CD8-positive, alpha-beta T cell (primary cell): ENCODE measurements at regions of chr7 and their contacts with region 1.

Region 1: DNA sequence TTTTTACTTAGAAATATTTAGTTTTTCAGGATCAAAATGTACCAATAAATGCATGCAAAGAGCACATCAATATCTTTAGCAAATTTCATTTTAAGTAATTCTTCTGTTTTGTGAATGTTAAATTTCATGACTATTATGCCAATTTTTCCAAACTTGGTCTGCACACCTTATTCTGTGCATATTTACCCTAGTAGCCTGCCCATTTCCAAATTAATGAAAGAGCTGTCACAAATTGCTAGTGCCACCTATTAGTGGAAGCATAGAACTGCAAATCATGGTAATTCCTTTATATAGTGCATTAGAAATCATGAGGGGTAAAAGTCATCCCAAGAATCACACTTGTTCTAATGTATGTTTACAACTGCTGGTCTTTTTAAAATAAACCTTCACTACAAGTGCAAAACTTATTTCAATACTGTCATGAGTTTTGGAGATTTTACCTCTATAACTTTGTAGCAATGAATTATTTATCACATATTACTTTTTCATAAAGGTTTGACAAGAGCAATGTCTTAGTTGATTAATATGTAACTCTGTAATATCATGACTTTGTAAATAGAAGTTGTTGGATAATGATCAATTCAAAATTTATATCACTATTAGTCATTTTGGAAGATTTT is 5.7 kb downstream of the SEMA3A start:
- DNase-seq: no peak
- ATAC-seq: no peak
- H3K4me3 ChIP-seq: no peak overlapping the region
- H3K4me3 Mint-ChIP-seq: no peak overlapping the region
- H3K27ac ChIP-seq: no peak overlapping the region
- H3K27ac Mint-ChIP-seq: no peak overlapping the region
- H3K4me1 ChIP-seq: no peaks in the 10 kb centered on the region
- H3K4me1 Mint-ChIP-seq: peaks cover 22% of the 10 kb centered on the region
- H3K27me3 ChIP-seq: no peaks in the 10 kb centered on the region
- H3K27me3 Mint-ChIP-seq: no peaks in the 10 kb centered on the region
- CTCF ChIP-seq: no peak

Region 2: DNA sequence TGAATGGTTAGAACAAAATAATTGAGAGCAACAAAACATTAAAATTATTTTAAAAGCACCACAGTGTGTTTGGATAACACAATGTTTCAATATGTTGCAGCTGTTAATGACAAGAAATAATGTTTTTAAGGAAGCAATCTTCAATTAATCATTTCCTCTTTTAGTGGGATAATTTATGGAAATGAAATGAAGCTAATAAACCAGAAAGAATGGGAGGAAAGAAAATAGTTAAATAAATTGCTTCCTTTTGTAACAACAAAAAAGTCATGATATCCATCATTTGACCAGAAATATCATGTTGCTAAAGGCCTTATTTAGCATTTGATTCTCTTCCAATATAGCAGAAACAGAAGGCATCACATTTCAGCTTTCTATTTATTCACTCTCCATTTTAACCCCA is 218.8 kb before region 1 on chr7:
- CTCF ChIA-PET with region 1: no interaction called
- POLR2A ChIA-PET with region 1: no interaction called
- intact Hi-C with region 1: loop called in 1 of 2 experiments (anchors 5 kb)
- DNase-seq: no peak
- ATAC-seq: no peak
- H3K4me3 ChIP-seq: no peak overlapping the region
- H3K4me3 Mint-ChIP-seq: no peak overlapping the region
- H3K27ac ChIP-seq: no peak overlapping the region
- H3K27ac Mint-ChIP-seq: no peak overlapping the region
- H3K4me1 ChIP-seq: no peaks in the 10 kb centered on the region
- H3K4me1 Mint-ChIP-seq: no peaks in the 10 kb centered on the region
- H3K27me3 ChIP-seq: no peaks in the 10 kb centered on the region
- H3K27me3 Mint-ChIP-seq: no peaks in the 10 kb centered on the region
- CTCF ChIP-seq: no peak

Region 3: GRCh38 chr7:84237533-84238173 is 48.8 kb after region 1 on chr7:
- CTCF ChIA-PET with region 1: no interaction called
- POLR2A ChIA-PET with region 1: no interaction called
- intact Hi-C with region 1: no loop called
- DNase-seq: peak in 1 of 9 experiments; percentile 2
- ATAC-seq: no peak
- H3K4me3 ChIP-seq: no peak overlapping the region
- H3K4me3 Mint-ChIP-seq: no peak overlapping the region
- H3K27ac ChIP-seq: no peak overlapping the region
- H3K27ac Mint-ChIP-seq: no peak overlapping the region
- H3K4me1 ChIP-seq: no peaks in the 10 kb centered on the region
- H3K4me1 Mint-ChIP-seq: no peaks in the 10 kb centered on the region
- H3K27me3 ChIP-seq: no peaks in the 10 kb centered on the region
- H3K27me3 Mint-ChIP-seq: no peaks in the 10 kb centered on the region
- CTCF ChIP-seq: no peak

Region 4: GRCh38 chr7:85554236-85555178 is 1365.6 kb after region 1 on chr7:
- CTCF ChIA-PET with region 1: no interaction called
- POLR2A ChIA-PET with region 1: no interaction called
- intact Hi-C with region 1: loop called in 1 of 2 experiments (anchors 10 kb)
- DNase-seq: peak in 2 of 9 experiments; percentile 2 to 27
- ATAC-seq: no peak
- H3K4me3 ChIP-seq: no peak overlapping the region
- H3K4me3 Mint-ChIP-seq: no peak overlapping the region
- H3K27ac ChIP-seq: no peak overlapping the region
- H3K27ac Mint-ChIP-seq: no peak overlapping the region
- H3K4me1 ChIP-seq: no peaks in the 10 kb centered on the region
- H3K4me1 Mint-ChIP-seq: no peaks in the 10 kb centered on the region
- H3K27me3 ChIP-seq: no peaks in the 10 kb centered on the region
- H3K27me3 Mint-ChIP-seq: no peaks in the 10 kb centered on the region
- CTCF ChIP-seq: peak; percentile 42